Naive thymus-derived CD4-positive, alpha-beta T cell (primary cell): ENCODE measurements at regions of chr6 and their contacts with region 1.

Region 1: GRCh38 chr6:104525677-104526312 is 333.9 kb downstream of the HACE1 start:
- DNase-seq: peak; percentile 39 to 69 (median 58)
- ATAC-seq: peak; percentile 97
- H3K4me3 ChIP-seq: no peak overlapping the region
- H3K4me3 Mint-ChIP-seq: peak overlapping the region; percentile 40 to 80 (median 66)
- H3K27ac ChIP-seq: no peak overlapping the region
- H3K27ac Mint-ChIP-seq: no peak overlapping the region
- H3K4me1 ChIP-seq: no peaks in the 10 kb centered on the region
- H3K4me1 Mint-ChIP-seq: peaks cover 0 to 6% (median 0%) of the 10 kb centered on the region in 7 donors
- H3K27me3 ChIP-seq: no peaks in the 10 kb centered on the region
- H3K27me3 Mint-ChIP-seq: peaks cover 0 to 23% (median 18%) of the 10 kb centered on the region in 5 donors

Region 2: DNA sequence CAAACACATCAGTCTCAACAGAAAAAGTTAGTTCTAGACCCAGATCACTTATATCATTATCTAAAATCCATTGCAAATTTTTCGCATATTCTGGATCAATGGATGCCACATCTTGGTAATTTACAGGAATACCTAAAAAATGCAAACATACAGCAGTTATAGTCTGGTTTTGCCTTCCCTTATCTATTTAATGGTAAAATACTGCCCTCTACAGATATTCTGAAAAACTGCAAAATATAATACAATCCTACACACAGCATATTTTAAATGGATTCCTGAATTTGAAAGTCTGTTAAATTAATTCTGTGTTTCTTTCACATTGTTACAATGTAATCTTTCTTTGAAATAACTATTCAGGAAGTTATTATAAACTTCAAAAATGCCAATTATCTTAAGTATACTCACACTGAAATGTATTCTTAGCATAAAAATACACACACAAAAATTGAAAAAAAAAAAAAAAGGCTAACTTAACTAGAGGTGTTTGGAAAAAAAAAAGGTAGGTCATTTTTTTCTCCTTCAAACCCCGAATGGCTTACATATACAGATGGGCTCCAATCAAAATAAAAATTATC is 245.6 kb after region 1 on chr6:
- CTCF ChIA-PET with region 1: no interaction called
- POLR2A ChIA-PET with region 1: no interaction called
- intact Hi-C with region 1: loop called (anchors 10 kb)
- DNase-seq: peak in 6 of 9 donors; percentile 14 to 51 (median 42)
- ATAC-seq: peak; percentile 78
- H3K4me3 ChIP-seq: no peak overlapping the region
- H3K4me3 Mint-ChIP-seq: no peak overlapping the region
- H3K27ac ChIP-seq: no peak overlapping the region
- H3K27ac Mint-ChIP-seq: peak overlapping the region in 1 of 9 donors; percentile 29
- H3K4me1 ChIP-seq: no peaks in the 10 kb centered on the region
- H3K4me1 Mint-ChIP-seq: peaks cover 3 to 14% (median 9%) of the 10 kb centered on the region in 7 donors
- H3K27me3 ChIP-seq: no peaks in the 10 kb centered on the region
- H3K27me3 Mint-ChIP-seq: no peaks in the 10 kb centered on the region